ENCODE measurements at regions of chr2 and their contacts with region 1.

Region 1: GRCh38 chr2:143264851-143265250 is 135.6 kb downstream of the ARHGAP15 start:
- DNase-seq: no peak
- H3K4me3 ChIP-seq: no peak overlapping the region
- H3K27ac ChIP-seq: no peak overlapping the region
- H3K4me1 ChIP-seq: no peaks in the 10 kb centered on the region
- H3K27me3 ChIP-seq: no peaks in the 10 kb centered on the region
- CTCF ChIP-seq: no peak
- EP300 ChIP-seq: no peak
- POLR2A ChIP-seq: no peak
- RAD21 ChIP-seq: no peak

Region 2: DNA sequence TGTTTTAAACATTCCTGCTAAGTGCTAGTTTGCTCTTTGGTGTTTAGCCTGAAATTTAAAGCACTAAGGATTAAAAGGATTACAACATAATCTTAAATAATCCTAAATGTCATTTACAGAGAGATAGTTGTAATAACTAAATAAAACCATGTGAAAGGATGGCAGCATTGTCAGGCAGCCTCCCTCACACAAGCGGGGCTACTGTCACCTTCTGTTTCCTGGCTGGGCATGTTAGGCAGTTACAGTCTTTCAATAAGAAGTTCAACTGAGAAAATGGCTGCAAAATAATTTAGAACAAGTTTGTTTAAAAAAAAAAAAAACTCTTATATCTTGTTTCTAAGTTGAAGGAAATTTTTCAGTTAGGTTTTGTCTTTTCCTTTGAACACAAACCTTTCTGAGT is 10.7 kb before region 1 on chr2:
- CTCF ChIA-PET with region 1: interaction called, 10 read pairs
- POLR2A ChIA-PET with region 1: no interaction called
- DNase-seq: no peak
- H3K4me3 ChIP-seq: no peak overlapping the region
- H3K27ac ChIP-seq: no peak overlapping the region
- H3K4me1 ChIP-seq: peaks cover 0 to 4% (median 0%) of the 10 kb centered on the region in 4 experiments; a peak in 1 of 7 replicates
- H3K27me3 ChIP-seq: peaks cover 0 to 1% (median 0%) of the 10 kb centered on the region in 4 experiments; a peak in 1 of 7 replicates
- CTCF ChIP-seq: no peak
- EP300 ChIP-seq: no peak
- POLR2A ChIP-seq: no peak
- RAD21 ChIP-seq: no peak

Region 3: GRCh38 chr2:143284087-143284675 is 19.3 kb after region 1 on chr2:
- CTCF ChIA-PET with region 1: interaction called, 19 read pairs
- POLR2A ChIA-PET with region 1: no interaction called
- DNase-seq: no peak
- H3K4me3 ChIP-seq: no peak overlapping the region
- H3K27ac ChIP-seq: no peak overlapping the region
- H3K4me1 ChIP-seq: no peaks in the 10 kb centered on the region
- H3K27me3 ChIP-seq: no peaks in the 10 kb centered on the region
- CTCF ChIP-seq: peak; percentile 60 to 77 (median 63)
- EP300 ChIP-seq: no peak
- POLR2A ChIP-seq: no peak
- RAD21 ChIP-seq: peak; percentile 44 to 62

Region 4: GRCh38 chr2:143629340-143629739 is 364.5 kb after region 1 on chr2:
- CTCF ChIA-PET with region 1: no interaction called
- POLR2A ChIA-PET with region 1: no interaction called
- DNase-seq: no peak
- H3K4me3 ChIP-seq: no peak overlapping the region
- H3K27ac ChIP-seq: no peak overlapping the region
- H3K4me1 ChIP-seq: no peaks in the 10 kb centered on the region
- H3K27me3 ChIP-seq: no peaks in the 10 kb centered on the region
- CTCF ChIP-seq: no peak
- EP300 ChIP-seq: no peak
- POLR2A ChIP-seq: no peak
- RAD21 ChIP-seq: no peak

Measured in H1 (cell line).